Mammary epithelial cell (primary cell): ENCODE measurements at regions of chr13 and their contacts with region 1.

Region 1: GRCh38 chr13:45441633-45442032 is 23.1 kb upstream of the COG3 start:
- DNase-seq: peak; percentile 79
- H3K4me3 ChIP-seq: no peak overlapping the region
- H3K27ac ChIP-seq: no peak overlapping the region
- H3K4me1 ChIP-seq: peaks cover 8% of the 10 kb centered on the region
- H3K27me3 ChIP-seq: no peaks in the 10 kb centered on the region
- CTCF ChIP-seq: peak; percentile 45 to 60

Region 2: GRCh38 chr13:45356966-45357672 is 84.5 kb before region 1 on chr13:
- CTCF ChIA-PET with region 1: no interaction called
- dilution Hi-C with region 1: loop called (anchors 5 kb)
- in situ Hi-C with region 1: no loop called
- intact Hi-C with region 1: no loop called
- DNase-seq: no peak
- H3K4me3 ChIP-seq: no peak overlapping the region
- H3K27ac ChIP-seq: no peak overlapping the region
- H3K4me1 ChIP-seq: peaks cover 8% of the 10 kb centered on the region
- H3K27me3 ChIP-seq: no peaks in the 10 kb centered on the region
- CTCF ChIP-seq: no peak

Region 3: GRCh38 chr13:45464687-45465453 is 23.2 kb after region 1 on chr13 and contains the start of gene COG3:
- CTCF ChIA-PET with region 1: no interaction called
- dilution Hi-C with region 1: no loop called
- in situ Hi-C with region 1: no loop called
- intact Hi-C with region 1: loop called (anchors 1 kb)
- DNase-seq: peak; percentile 98
- H3K4me3 ChIP-seq: peak within 1 kb of the TSS; percentile 75 to 98 (median 89)
- H3K27ac ChIP-seq: peak within 1 kb of the TSS; percentile 74
- H3K4me1 ChIP-seq: peaks cover 16% of the 10 kb centered on the region
- H3K27me3 ChIP-seq: no peaks in the 10 kb centered on the region
- CTCF ChIP-seq: peak in 1 of 2 donors; percentile 42
- total RNA-seq, gene COG3: 35.7 to 39.0 TPM

Region 4: GRCh38 chr13:45482571-45483173 is 41.0 kb after region 1 on chr13:
- CTCF ChIA-PET with region 1: no interaction called
- dilution Hi-C with region 1: loop called (anchors 5 kb)
- in situ Hi-C with region 1: no loop called
- intact Hi-C with region 1: no loop called
- DNase-seq: peak; percentile 80
- H3K4me3 ChIP-seq: peak overlapping the region; percentile 24 to 38 (median 36)
- H3K27ac ChIP-seq: peak overlapping the region; percentile 96
- H3K4me1 ChIP-seq: peaks cover 26% of the 10 kb centered on the region
- H3K27me3 ChIP-seq: no peaks in the 10 kb centered on the region
- CTCF ChIP-seq: no peak

Region 5: GRCh38 chr13:45490068-45490467 is 48.4 kb after region 1 on chr13:
- CTCF ChIA-PET with region 1: no interaction called
- dilution Hi-C with region 1: no loop called
- in situ Hi-C with region 1: no loop called
- intact Hi-C with region 1: loop called (anchors 2 kb)
- DNase-seq: no peak
- H3K4me3 ChIP-seq: no peak overlapping the region
- H3K27ac ChIP-seq: no peak overlapping the region
- H3K4me1 ChIP-seq: no peaks in the 10 kb centered on the region
- H3K27me3 ChIP-seq: no peaks in the 10 kb centered on the region
- CTCF ChIP-seq: peak; percentile 41 to 50